T-cell (primary cell): ENCODE measurements at regions of chr12 and their contacts with region 1.

Region 1: DNA sequence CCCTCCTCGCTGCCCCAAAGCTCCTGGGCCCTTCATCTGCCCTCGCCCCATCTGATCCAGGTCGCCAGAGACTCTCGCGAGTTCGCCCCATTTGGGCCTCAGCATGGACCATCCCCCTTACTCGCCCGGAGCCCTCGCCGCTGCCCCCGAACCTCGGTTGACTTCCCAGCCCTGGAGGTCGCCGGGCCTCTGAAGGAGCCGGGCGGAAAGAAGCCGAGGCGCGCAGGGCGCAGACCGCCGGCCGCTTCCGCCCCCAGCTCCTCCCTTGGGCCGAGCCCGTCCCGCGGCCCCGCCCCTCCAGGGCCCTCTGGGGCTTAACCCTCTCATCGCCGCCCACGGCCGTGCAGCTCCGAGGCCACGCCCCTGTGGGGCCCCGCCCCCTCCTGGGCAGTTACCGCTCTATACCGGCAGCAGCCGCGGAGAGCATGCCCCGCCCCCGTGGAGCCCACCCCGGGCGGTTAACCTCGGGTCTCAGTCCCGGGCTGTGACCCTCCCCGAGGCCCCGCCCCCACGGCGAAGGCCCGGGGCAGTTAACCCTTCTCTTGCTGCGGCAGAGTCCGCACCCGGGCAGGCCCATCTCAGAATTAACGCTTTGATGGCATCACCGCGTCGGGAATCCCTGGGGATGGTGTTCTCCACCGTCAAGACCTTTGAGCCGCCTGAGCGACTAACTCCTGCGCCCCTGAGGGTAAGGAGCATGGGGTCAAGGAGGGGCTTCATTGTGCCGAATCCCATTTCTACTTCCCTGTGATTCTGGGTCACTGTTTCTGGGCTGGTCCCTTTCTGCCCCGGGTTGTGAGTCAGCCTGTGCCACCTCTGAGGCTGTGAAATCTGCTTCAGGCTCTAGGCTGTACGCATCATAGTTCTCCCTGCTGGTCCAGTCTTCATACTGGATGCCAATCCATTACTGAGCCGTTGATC is at the start of gene SPSB2:
- DNase-seq: peak; percentile 95 to 100 (median 98)
- ATAC-seq: peak; percentile 84 to 92 (median 86)
- H3K4me3 ChIP-seq: peak within 1 kb of the TSS; percentile 77 to 94
- H3K4me3 Mint-ChIP-seq: peak within 1 kb of the TSS; percentile 87 to 93 (median 89)
- H3K27ac ChIP-seq: peak within 1 kb of the TSS; percentile 69
- H3K27ac Mint-ChIP-seq: peak within 1 kb of the TSS; percentile 88 to 90
- H3K4me1 ChIP-seq: peaks cover 19 to 56% of the 10 kb centered on the region in 2 experiments
- H3K4me1 Mint-ChIP-seq: peaks cover 46 to 51% (median 48%) of the 10 kb centered on the region in 3 donors
- H3K27me3 ChIP-seq: no peaks in the 10 kb centered on the region
- H3K27me3 Mint-ChIP-seq: no peaks in the 10 kb centered on the region
- total RNA-seq, gene SPSB2: 6.2 to 25.9 (median 21.8) TPM

Region 2: GRCh38 chr12:6851921-6852650 is 21.3 kb before region 1 on chr12 and contains the start of gene USP5:
- CTCF ChIA-PET with region 1: interaction called, 5 to 58 read pairs
- POLR2A ChIA-PET with region 1: interaction called, 7 to 11 read pairs
- DNase-seq: peak; percentile 92 to 100 (median 99)
- ATAC-seq: peak; percentile 78 to 81 (median 79)
- H3K4me3 ChIP-seq: peak within 1 kb of the TSS; percentile 69 to 97
- H3K4me3 Mint-ChIP-seq: peak within 1 kb of the TSS; percentile 79 to 98 (median 94)
- H3K27ac ChIP-seq: peak within 1 kb of the TSS; percentile 94
- H3K27ac Mint-ChIP-seq: peak within 1 kb of the TSS; percentile 98 to 99
- H3K4me1 ChIP-seq: peaks cover 20 to 34% of the 10 kb centered on the region in 2 experiments
- H3K4me1 Mint-ChIP-seq: peaks cover 22 to 38% (median 33%) of the 10 kb centered on the region in 3 donors
- H3K27me3 ChIP-seq: no peaks in the 10 kb centered on the region
- H3K27me3 Mint-ChIP-seq: no peaks in the 10 kb centered on the region
- total RNA-seq, gene USP5: 64.2 to 95.8 (median 85.8) TPM

Region 3: GRCh38 chr12:6904280-6905278 is 31.2 kb after region 1 on chr12 and contains the start of gene LRRC23:
- CTCF ChIA-PET with region 1: interaction called, 4 to 11 read pairs
- POLR2A ChIA-PET with region 1: interaction called in 1 of 2 experiments, 12 read pairs
- DNase-seq: peak; percentile 87 to 99 (median 96)
- ATAC-seq: peak; percentile 97 to 98 (median 98)
- H3K4me3 ChIP-seq: peak within 1 kb of the TSS; percentile 68 to 83
- H3K4me3 Mint-ChIP-seq: no peak within 1 kb of the TSS
- H3K27ac ChIP-seq: peak within 1 kb of the TSS; percentile 93
- H3K27ac Mint-ChIP-seq: no peak within 1 kb of the TSS
- H3K4me1 ChIP-seq: peaks cover 8 to 15% of the 10 kb centered on the region in 2 experiments
- H3K4me1 Mint-ChIP-seq: peaks cover 4 to 5% (median 4%) of the 10 kb centered on the region in 3 donors
- H3K27me3 ChIP-seq: no peaks in the 10 kb centered on the region
- H3K27me3 Mint-ChIP-seq: no peaks in the 10 kb centered on the region
- total RNA-seq, gene LRRC23: 8.7 to 13.6 (median 8.8) TPM

Region 4: DNA sequence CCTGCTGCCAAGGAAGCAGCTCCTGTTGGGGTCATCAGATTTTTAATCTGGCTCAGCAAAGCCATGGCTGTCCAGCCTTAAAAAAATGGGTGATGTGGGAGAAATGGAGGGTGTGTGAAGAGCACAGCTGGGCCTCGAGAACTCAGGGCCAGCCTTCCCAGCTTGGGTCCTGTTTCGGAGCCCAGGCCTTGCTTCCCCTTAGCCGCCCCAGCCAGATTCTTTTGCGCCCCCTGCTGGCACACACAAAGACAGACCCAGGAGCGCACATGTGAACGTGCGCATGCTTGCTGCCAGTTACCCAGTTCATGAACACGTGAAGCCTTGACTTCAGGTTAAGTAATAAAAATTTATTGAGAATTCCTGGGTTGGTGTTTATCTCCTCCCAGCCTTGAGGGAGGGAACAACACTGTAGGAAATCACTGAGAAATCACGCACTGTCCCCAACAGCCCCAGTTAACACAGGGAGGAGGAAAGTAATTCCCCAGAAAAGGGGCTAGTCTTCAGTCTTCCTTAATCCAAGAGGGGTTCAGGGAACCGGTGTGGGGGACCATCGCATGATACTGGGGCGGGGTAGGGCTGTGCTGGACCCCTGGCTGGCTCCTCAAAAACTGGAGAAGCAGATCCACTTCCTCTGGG is 91.8 kb after region 1 on chr12:
- CTCF ChIA-PET with region 1: interaction called, 4 to 11 read pairs
- POLR2A ChIA-PET with region 1: interaction called in 1 of 2 experiments, 3 read pairs
- DNase-seq: peak; percentile 73 to 95 (median 84)
- ATAC-seq: peak; percentile 43 to 52 (median 49)
- H3K4me3 ChIP-seq: no peak overlapping the region
- H3K4me3 Mint-ChIP-seq: no peak overlapping the region
- H3K27ac ChIP-seq: peak overlapping the region; percentile 69
- H3K27ac Mint-ChIP-seq: peak overlapping the region; percentile 83 to 87
- H3K4me1 ChIP-seq: peaks cover 30 to 72% of the 10 kb centered on the region in 2 experiments
- H3K4me1 Mint-ChIP-seq: peaks cover 44 to 62% (median 55%) of the 10 kb centered on the region in 3 donors
- H3K27me3 ChIP-seq: no peaks in the 10 kb centered on the region
- H3K27me3 Mint-ChIP-seq: no peaks in the 10 kb centered on the region

Region 5: GRCh38 chr12:6996040-6996441 is 122.7 kb after region 1 on chr12:
- CTCF ChIA-PET with region 1: no interaction called
- POLR2A ChIA-PET with region 1: no interaction called
- DNase-seq: no peak
- ATAC-seq: no peak
- H3K4me3 ChIP-seq: no peak overlapping the region
- H3K4me3 Mint-ChIP-seq: no peak overlapping the region
- H3K27ac ChIP-seq: no peak overlapping the region
- H3K27ac Mint-ChIP-seq: peak overlapping the region in 1 of 2 donors; percentile 7
- H3K4me1 ChIP-seq: no peaks in the 10 kb centered on the region
- H3K4me1 Mint-ChIP-seq: peaks cover 0 to 10% (median 6%) of the 10 kb centered on the region in 3 donors
- H3K27me3 ChIP-seq: no peaks in the 10 kb centered on the region
- H3K27me3 Mint-ChIP-seq: no peaks in the 10 kb centered on the region

Region 6: DNA sequence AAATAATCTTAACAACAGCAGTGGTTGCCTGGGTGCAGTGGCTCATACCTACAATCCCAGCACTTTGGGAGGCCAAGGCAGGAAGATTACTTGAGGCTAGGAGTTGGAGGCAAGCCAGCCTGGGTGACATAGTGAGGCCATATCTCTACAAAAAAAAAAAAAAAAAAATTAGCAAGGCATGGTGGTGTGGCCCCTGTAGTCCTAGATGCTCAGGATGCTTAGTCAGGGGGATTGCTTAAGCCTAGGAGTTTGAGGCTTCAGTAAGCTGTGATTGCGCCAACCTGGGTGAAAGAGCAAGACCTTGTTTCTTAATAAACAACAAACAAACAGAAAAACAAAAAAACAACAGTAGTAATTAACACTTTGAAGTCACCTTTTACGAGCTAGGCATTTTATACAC is 429.9 kb after region 1 on chr12:
- CTCF ChIA-PET with region 1: no interaction called
- POLR2A ChIA-PET with region 1: no interaction called
- DNase-seq: no peak
- ATAC-seq: no peak
- H3K4me3 ChIP-seq: no peak overlapping the region
- H3K4me3 Mint-ChIP-seq: no peak overlapping the region
- H3K27ac ChIP-seq: no peak overlapping the region
- H3K27ac Mint-ChIP-seq: no peak overlapping the region
- H3K4me1 ChIP-seq: no peaks in the 10 kb centered on the region
- H3K4me1 Mint-ChIP-seq: no peaks in the 10 kb centered on the region
- H3K27me3 ChIP-seq: peaks cover 0 to 6% of the 10 kb centered on the region in 2 experiments
- H3K27me3 Mint-ChIP-seq: peaks cover 16 to 30% of the 10 kb centered on the region in 2 donors